ENCODE measurements at regions of chr9 and their contacts with region 1.

Region 1: DNA sequence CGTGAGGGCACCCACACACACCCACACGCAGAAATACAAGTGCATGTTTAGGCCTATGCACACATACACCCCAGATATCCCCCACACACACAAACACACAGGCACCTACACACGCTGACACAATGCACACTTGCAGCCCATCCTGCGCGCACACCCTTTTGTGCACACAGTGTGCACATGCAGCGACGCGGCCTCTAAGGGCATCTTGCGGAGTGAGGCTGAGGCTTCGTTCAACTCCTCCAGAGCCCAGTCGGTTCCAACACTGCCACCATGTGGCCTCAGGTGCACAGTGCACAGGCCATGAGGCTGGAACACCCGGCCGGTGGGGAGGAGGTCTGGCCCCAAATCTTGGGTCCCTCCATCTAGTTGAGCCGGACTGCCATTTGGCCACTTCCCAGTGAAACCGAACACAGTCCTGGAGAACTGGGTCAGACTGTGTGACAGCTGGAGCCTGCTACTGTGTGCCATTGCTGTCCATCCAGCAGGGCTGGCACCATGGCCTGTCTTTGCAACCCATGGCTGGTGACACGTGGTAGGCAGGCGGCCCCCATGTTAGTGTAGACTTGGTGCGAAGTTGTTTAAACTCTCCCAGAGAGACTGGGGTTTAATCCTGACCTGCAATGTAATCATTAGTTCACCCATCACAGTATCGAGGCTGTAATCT is 97.7 kb upstream of the MVB12B start:
- DNase-seq: peak; percentile 40
- H3K4me3 Mint-ChIP-seq: no peak overlapping the region
- H3K27ac Mint-ChIP-seq: no peak overlapping the region
- H3K4me1 Mint-ChIP-seq: no peaks in the 10 kb centered on the region
- H3K27me3 Mint-ChIP-seq: peaks cover 23% of the 10 kb centered on the region

Region 2: GRCh38 chr9:125407974-125408900 is 820.7 kb before region 1 on chr9:
- intact Hi-C with region 1: loop called (anchors 1 kb)
- DNase-seq: peak; percentile 59
- H3K4me3 Mint-ChIP-seq: peak overlapping the region; percentile 77
- H3K27ac Mint-ChIP-seq: no peak overlapping the region
- H3K4me1 Mint-ChIP-seq: peaks cover 11% of the 10 kb centered on the region
- H3K27me3 Mint-ChIP-seq: peaks cover 15% of the 10 kb centered on the region

Region 3: GRCh38 chr9:126270556-126270955 is 41.6 kb after region 1 on chr9:
- intact Hi-C with region 1: no loop called
- DNase-seq: no peak
- H3K4me3 Mint-ChIP-seq: no peak overlapping the region
- H3K27ac Mint-ChIP-seq: no peak overlapping the region
- H3K4me1 Mint-ChIP-seq: no peaks in the 10 kb centered on the region
- H3K27me3 Mint-ChIP-seq: peaks cover 7% of the 10 kb centered on the region

Measured in activated T-helper 2 cell treated with anti-CD3 and anti-CD28 coated beads, Interferon-gamma antibody, Interleukin-2, Interleukin-4, amounts not matched to agents 10 μg/mL and 5 μg/mL and 100 μg/mL, durations not matched to agents 14 hours and 24 hours and 36 hours (primary cell).